ENCODE measurements at regions of chr3 and their contacts with region 1.

Region 1: GRCh38 chr3:51498876-51499738 is 708 bp downstream of the DCAF1 start:
- DNase-seq: peak; percentile 96 to 97
- H3K4me3 ChIP-seq: peak overlapping the region; percentile 50
- H3K4me3 Mint-ChIP-seq: peak overlapping the region; percentile 93
- H3K27ac Mint-ChIP-seq: peak overlapping the region; percentile 97
- H3K4me1 ChIP-seq: no peaks in the 10 kb centered on the region
- H3K4me1 Mint-ChIP-seq: peaks cover 8% of the 10 kb centered on the region
- H3K27me3 ChIP-seq: no peaks in the 10 kb centered on the region
- H3K27me3 Mint-ChIP-seq: no peaks in the 10 kb centered on the region
- CTCF ChIP-seq: no peak

Region 2: DNA sequence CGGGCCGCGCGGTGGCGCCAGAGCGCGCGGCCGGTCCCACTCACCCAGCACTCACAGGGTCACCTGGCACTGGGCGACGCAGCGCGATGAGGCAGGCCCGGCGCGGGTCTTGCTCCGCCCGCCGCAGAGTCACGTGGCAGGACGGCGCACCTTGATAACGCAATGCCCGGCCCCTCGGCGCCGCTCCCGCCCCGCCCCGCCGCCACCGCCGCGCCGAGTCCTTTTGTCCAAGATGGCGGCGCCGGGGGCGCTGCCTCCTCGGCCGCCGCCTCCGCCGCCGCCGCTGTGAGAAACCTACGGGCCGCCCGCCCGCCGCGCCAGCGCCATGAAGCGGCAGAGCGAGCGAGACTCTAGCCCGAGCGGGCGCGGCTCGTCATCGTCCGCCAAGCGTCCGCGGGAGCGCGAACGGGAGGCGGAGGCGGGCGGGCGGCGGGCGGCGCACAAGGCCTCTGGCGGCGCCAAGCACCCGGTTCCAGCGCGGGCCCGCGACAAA is 108.0 kb before region 1 on chr3 and contains the start of gene RBM15B:
- CTCF ChIA-PET with region 1: interaction called, 21 read pairs
- POLR2A ChIA-PET with region 1: interaction called, 3 read pairs
- intact Hi-C with region 1: loop called (anchors 1 kb)
- DNase-seq: peak; percentile 97 to 98
- H3K4me3 ChIP-seq: peak within 1 kb of the TSS; percentile 90
- H3K4me3 Mint-ChIP-seq: peak within 1 kb of the TSS; percentile 74
- H3K27ac Mint-ChIP-seq: peak within 1 kb of the TSS; percentile 57
- H3K4me1 ChIP-seq: peaks cover 51% of the 10 kb centered on the region
- H3K4me1 Mint-ChIP-seq: peaks cover 34% of the 10 kb centered on the region
- H3K27me3 ChIP-seq: no peaks in the 10 kb centered on the region
- H3K27me3 Mint-ChIP-seq: no peaks in the 10 kb centered on the region
- CTCF ChIP-seq: peak in 1 of 2 experiments; percentile 87
- total RNA-seq, gene RBM15B: 32.3 and 33.7 TPM in 2 replicates

Region 3: DNA sequence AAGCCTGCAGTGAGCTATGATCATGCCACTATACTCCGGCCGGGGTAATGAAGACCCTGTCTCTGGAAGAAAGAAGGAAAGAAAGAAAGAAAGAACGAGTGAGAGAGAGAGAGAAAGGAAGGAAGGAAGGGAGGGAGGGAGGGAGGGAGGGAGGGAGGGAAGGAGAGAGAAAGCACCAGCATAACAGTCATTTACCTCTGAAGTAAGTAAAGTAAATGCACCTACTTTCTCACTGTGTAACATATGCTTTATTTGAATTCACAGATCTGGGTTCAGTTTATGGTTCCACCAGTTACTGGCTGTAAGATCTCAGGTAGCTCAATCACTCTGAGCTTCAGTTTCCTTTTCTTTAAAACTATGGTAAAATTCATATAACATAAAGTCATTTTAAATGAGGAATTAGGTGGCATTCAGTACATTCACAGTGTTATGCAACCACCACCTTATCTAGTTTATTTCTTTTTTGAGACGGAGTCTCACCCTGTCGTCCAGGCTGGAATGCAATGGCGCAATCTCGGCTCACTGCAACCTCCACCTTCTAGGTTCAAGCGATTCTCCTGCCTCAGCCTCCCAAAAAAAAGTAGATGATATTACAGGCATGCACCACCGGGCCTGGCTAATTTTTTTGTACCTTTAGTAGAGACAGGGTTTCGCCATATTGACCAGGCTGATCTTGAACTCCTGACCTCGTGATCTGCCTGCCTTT is 23.3 kb after region 1 on chr3:
- CTCF ChIA-PET with region 1: interaction called, 7 read pairs
- POLR2A ChIA-PET with region 1: interaction called, 12 read pairs
- intact Hi-C with region 1: no loop called
- DNase-seq: peak in 1 of 2 experiments; percentile 20
- H3K4me3 ChIP-seq: no peak overlapping the region
- H3K4me3 Mint-ChIP-seq: no peak overlapping the region
- H3K27ac Mint-ChIP-seq: no peak overlapping the region
- H3K4me1 ChIP-seq: no peaks in the 10 kb centered on the region
- H3K4me1 Mint-ChIP-seq: peaks cover 7% of the 10 kb centered on the region
- H3K27me3 ChIP-seq: no peaks in the 10 kb centered on the region
- H3K27me3 Mint-ChIP-seq: no peaks in the 10 kb centered on the region
- CTCF ChIP-seq: no peak

Region 4: DNA sequence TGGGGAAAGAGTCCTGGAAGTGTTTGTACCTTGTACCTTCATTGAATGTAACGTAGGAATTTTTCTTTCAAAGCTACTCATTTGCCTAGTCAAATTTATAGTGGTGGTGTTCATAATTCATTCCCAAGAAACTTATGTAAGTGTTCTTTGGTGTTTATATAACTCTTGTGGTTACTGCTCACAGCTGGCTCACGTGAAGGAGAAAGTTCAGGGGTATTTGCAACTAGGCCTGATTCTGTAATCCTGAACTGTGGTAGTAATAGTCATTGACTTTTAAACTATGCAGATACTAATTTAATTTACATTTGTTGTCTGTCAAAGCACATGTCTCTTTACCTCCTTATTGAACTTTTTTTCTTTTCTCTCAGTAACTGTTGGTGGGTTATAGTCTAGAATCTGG is 121.4 kb after region 1 on chr3:
- CTCF ChIA-PET with region 1: interaction called, 4 read pairs
- POLR2A ChIA-PET with region 1: interaction called, 11 read pairs
- intact Hi-C with region 1: no loop called
- DNase-seq: no peak
- H3K4me3 ChIP-seq: no peak overlapping the region
- H3K4me3 Mint-ChIP-seq: no peak overlapping the region
- H3K27ac Mint-ChIP-seq: no peak overlapping the region
- H3K4me1 ChIP-seq: 0 out of 2 replicates have a peak, but pooled peaks cover 3% of the 10 kb centered on the region
- H3K4me1 Mint-ChIP-seq: peaks cover 15% of the 10 kb centered on the region
- H3K27me3 ChIP-seq: no peaks in the 10 kb centered on the region
- H3K27me3 Mint-ChIP-seq: no peaks in the 10 kb centered on the region
- CTCF ChIP-seq: no peak

Region 5: GRCh38 chr3:51682079-51682478 is 183.0 kb after region 1 on chr3:
- CTCF ChIA-PET with region 1: interaction called, 31 read pairs
- POLR2A ChIA-PET with region 1: interaction called, 4 read pairs
- intact Hi-C with region 1: loop called (anchors 1 kb)
- DNase-seq: peak; percentile 76 to 83
- H3K4me3 ChIP-seq: no peak overlapping the region
- H3K4me3 Mint-ChIP-seq: no peak overlapping the region
- H3K27ac Mint-ChIP-seq: no peak overlapping the region
- H3K4me1 ChIP-seq: no peaks in the 10 kb centered on the region
- H3K4me1 Mint-ChIP-seq: no peaks in the 10 kb centered on the region
- H3K27me3 ChIP-seq: no peaks in the 10 kb centered on the region
- H3K27me3 Mint-ChIP-seq: no peaks in the 10 kb centered on the region
- CTCF ChIP-seq: peak; percentile 69 to 82

Region 6: DNA sequence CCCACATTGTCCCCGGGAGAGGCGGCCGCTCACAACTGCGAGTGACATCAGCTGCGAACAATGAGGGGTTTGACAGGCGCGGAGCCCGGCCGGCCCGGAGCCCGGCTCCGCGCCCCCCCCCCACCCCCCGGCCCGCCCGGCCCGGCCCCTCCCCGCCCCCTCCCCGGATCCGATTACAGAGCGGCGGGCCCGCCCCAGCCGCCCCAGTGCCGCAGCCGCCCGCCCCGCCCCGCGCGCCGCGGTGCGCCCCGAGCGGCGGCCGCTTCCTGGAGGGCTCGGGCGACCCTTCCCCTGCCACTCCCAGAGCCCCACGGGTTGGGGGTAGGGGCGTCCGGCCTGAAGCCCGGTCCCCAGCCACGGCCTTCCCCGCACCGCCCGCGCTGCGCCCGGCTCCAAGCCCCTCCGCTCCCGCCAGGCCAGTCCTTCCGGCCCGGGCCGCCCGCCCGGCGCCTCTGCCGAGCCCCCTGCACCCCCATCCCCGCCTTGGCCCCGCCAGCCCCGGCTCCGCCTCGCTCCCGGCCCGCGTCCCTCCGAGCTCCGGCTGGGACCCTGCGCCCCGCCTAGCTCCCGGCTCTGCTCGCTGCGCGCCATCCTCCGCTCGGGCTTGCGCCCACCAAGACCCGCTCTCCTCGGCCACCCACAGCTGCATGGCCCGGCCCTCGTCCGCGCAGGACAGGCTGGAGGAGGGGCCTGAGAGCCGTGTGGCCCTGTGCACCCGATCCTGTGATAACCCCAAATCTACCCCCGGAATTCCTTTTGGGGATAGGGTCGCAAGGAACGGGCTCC is 468.5 kb after region 1 on chr3 and contains the start of gene PCBP4:
- CTCF ChIA-PET with region 1: no interaction called
- POLR2A ChIA-PET with region 1: interaction called, 11 read pairs
- intact Hi-C with region 1: no loop called
- DNase-seq: peak; percentile 79 to 80
- H3K4me3 ChIP-seq: peak within 1 kb of the TSS; percentile 53
- H3K4me3 Mint-ChIP-seq: peak within 1 kb of the TSS; percentile 86
- H3K27ac Mint-ChIP-seq: peak within 1 kb of the TSS; percentile 79
- H3K4me1 ChIP-seq: peaks cover 13% of the 10 kb centered on the region
- H3K4me1 Mint-ChIP-seq: peaks cover 20% of the 10 kb centered on the region
- H3K27me3 ChIP-seq: no peaks in the 10 kb centered on the region
- H3K27me3 Mint-ChIP-seq: no peaks in the 10 kb centered on the region
- CTCF ChIP-seq: no peak
- total RNA-seq, gene PCBP4: 42.3 and 46.5 TPM in 2 replicates

Measured in Caco-2 (cell line).